AG04450 (cell line): ENCODE measurements at regions of chr2 and their contacts with region 1.

Region 1: DNA sequence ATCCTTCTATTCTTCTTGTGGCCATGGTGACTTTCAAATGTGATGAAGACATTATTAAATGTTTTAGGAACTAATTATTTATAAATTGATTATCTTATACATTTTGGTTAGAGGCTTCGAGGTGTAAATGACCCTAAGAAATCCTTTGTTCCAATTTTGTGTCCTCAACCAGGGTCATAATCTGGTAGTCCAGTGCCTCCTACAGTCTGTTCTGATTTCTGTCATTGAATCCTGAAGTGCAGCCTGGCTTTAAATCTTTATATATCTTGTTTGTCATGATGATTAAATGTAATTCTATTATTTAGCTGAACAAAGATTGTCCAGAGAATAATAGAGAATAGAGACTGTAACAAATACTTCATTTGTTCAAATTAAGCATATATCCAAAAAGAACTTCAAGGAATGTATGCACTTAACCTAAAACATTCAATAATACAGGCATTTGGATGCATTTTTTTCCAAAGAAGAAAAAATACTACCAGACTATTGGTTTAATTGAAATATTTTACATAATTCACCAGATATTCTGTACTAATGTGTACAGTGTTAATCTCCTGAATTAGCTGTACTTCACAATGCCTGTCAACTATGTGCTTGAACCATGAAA is 89.8 kb downstream of the PRPF40A start:
- DNase-seq: no peak
- H3K4me3 ChIP-seq: no peak overlapping the region
- H3K27ac ChIP-seq: no peak overlapping the region
- H3K27me3 ChIP-seq: no peaks in the 10 kb centered on the region
- CTCF ChIP-seq: peak; percentile 72

Region 2: GRCh38 chr2:150824118-150824517 is 1803.3 kb before region 1 on chr2:
- CTCF ChIA-PET with region 1: no interaction called
- POLR2A ChIA-PET with region 1: no interaction called
- DNase-seq: no peak
- H3K4me3 ChIP-seq: no peak overlapping the region
- H3K27ac ChIP-seq: no peak overlapping the region
- H3K27me3 ChIP-seq: no peaks in the 10 kb centered on the region
- CTCF ChIP-seq: no peak

Region 3: GRCh38 chr2:152189622-152190495 is 437.6 kb before region 1 on chr2:
- CTCF ChIA-PET with region 1: interaction called, 27 read pairs
- POLR2A ChIA-PET with region 1: no interaction called
- DNase-seq: peak; percentile 58
- H3K4me3 ChIP-seq: no peak overlapping the region
- H3K27ac ChIP-seq: no peak overlapping the region
- H3K27me3 ChIP-seq: no peaks in the 10 kb centered on the region
- CTCF ChIP-seq: peak; percentile 87

Region 4: GRCh38 chr2:152335010-152335725 is 292.3 kb before region 1 on chr2 and contains the start of gene FMNL2:
- CTCF ChIA-PET with region 1: interaction called, 10 read pairs
- POLR2A ChIA-PET with region 1: no interaction called
- DNase-seq: peak; percentile 18
- H3K4me3 ChIP-seq: peak within 1 kb of the TSS; percentile 88
- H3K27ac ChIP-seq: no peak within 1 kb of the TSS
- H3K27me3 ChIP-seq: no peaks in the 10 kb centered on the region
- CTCF ChIP-seq: 0 out of 2 replicates have a peak, but pooled peaks have one; percentile 2
- polyA plus RNA-seq, gene FMNL2: 16.2 and 22.0 TPM in 2 replicates

Region 5: GRCh38 chr2:152766928-152767327 is 139.5 kb after region 1 on chr2:
- CTCF ChIA-PET with region 1: no interaction called
- POLR2A ChIA-PET with region 1: no interaction called
- DNase-seq: peak; percentile 29
- H3K4me3 ChIP-seq: no peak overlapping the region
- H3K27ac ChIP-seq: no peak overlapping the region
- H3K27me3 ChIP-seq: no peaks in the 10 kb centered on the region
- CTCF ChIP-seq: no peak